ENCODE measurements at regions of chr15 and their contacts with region 1.

Region 1: GRCh38 chr15:89243691-89244471 is at the start of gene FANCI:
- DNase-seq: peak; percentile 87
- ATAC-seq: peak; percentile 96
- H3K4me3 ChIP-seq: peak within 1 kb of the TSS; percentile 86 to 87 (median 86)
- H3K27ac ChIP-seq: peak within 1 kb of the TSS; percentile 57
- H3K4me1 ChIP-seq: peaks cover 22% of the 10 kb centered on the region
- H3K27me3 ChIP-seq: peaks cover 0 to 12% of the 10 kb centered on the region in 2 experiments; a peak in 4 of 5 replicates
- CTCF ChIP-seq: peak; percentile 99
- EP300 ChIP-seq: no peak
- POLR2A ChIP-seq: peak; percentile 60 to 81; a peak in 3 of 4 replicates
- RAD21 ChIP-seq: peak; percentile 68
- total RNA-seq, gene FANCI: 68.8 and 99.2 TPM in 2 replicates

Region 2: GRCh38 chr15:89206908-89207331 is 37.0 kb before region 1 on chr15:
- CTCF ChIA-PET with region 1: interaction called, 4 read pairs
- POLR2A ChIA-PET with region 1: interaction called, 4 read pairs
- in situ Hi-C with region 1: loop called (anchors 5 kb)
- intact Hi-C with region 1: no loop called
- DNase-seq: peak; percentile 56
- ATAC-seq: peak; percentile 96
- H3K4me3 ChIP-seq: peak overlapping the region; percentile 15 to 51 (median 30); a peak in 4 of 6 replicates
- H3K27ac ChIP-seq: no peak overlapping the region
- H3K4me1 ChIP-seq: peaks cover 14% of the 10 kb centered on the region
- H3K27me3 ChIP-seq: no peaks in the 10 kb centered on the region
- CTCF ChIP-seq: peak; percentile 94
- EP300 ChIP-seq: no peak
- POLR2A ChIP-seq: no peak
- RAD21 ChIP-seq: peak; percentile 83

Region 3: DNA sequence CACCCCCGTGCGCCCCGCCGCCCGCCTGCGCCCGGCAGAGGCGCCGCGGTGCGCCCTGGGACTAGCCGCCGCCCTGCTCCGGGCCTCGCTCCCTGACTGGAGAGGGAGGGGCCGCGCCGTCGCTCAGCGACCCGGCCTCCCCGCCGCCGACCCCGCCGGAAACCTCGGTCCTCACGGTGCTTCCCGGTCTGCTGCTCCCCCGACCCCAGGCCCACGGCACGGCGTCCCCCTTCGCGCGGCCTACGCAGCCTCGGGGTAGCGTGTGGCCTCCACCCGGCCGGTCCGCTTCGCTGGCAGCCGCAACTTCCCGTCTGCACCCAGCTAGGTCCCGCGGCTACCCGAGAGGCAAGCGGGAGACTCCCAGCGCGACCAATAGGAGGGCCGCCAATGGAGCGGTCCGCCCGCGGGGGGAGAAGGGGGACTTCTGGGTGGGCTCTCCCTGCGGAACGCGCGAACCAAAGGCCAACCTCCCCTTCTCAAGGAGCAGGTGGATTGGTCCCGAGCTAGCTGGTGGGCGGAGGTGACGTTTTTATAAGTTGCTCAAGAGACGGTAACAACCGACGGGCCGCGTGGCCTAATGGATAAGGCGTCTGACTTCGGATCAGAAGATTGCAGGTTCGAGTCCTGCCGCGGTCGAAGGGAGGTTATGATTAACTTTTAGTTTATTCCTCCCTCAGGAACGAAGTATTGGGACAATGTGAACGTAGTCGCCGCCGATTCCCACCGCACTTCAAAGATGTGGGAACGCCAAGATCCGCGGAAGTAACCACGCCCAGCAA is 90.8 kb after region 1 on chr15 and contains the start of gene POLG:
- CTCF ChIA-PET with region 1: no interaction called
- POLR2A ChIA-PET with region 1: no interaction called
- in situ Hi-C with region 1: no loop called
- intact Hi-C with region 1: loop called (anchors 1 kb)
- DNase-seq: peak; percentile 96
- ATAC-seq: peak; percentile 93
- H3K4me3 ChIP-seq: peak within 1 kb of the TSS; percentile 86 to 91 (median 88)
- H3K27ac ChIP-seq: peak within 1 kb of the TSS; percentile 83
- H3K4me1 ChIP-seq: peaks cover 57% of the 10 kb centered on the region
- H3K27me3 ChIP-seq: peaks cover 0 to 5% of the 10 kb centered on the region in 2 experiments; a peak in 1 of 5 replicates
- CTCF ChIP-seq: no peak; the same call in 1 of the 2 replicates
- EP300 ChIP-seq: no peak
- POLR2A ChIP-seq: peak; percentile 95 to 98
- RAD21 ChIP-seq: peak; percentile 9; the same call in 1 of the 2 replicates
- total RNA-seq, gene POLG: 19.1 and 35.5 TPM in 2 replicates